ENCODE measurements at regions of chr11 and their contacts with region 1.

Region 1: DNA sequence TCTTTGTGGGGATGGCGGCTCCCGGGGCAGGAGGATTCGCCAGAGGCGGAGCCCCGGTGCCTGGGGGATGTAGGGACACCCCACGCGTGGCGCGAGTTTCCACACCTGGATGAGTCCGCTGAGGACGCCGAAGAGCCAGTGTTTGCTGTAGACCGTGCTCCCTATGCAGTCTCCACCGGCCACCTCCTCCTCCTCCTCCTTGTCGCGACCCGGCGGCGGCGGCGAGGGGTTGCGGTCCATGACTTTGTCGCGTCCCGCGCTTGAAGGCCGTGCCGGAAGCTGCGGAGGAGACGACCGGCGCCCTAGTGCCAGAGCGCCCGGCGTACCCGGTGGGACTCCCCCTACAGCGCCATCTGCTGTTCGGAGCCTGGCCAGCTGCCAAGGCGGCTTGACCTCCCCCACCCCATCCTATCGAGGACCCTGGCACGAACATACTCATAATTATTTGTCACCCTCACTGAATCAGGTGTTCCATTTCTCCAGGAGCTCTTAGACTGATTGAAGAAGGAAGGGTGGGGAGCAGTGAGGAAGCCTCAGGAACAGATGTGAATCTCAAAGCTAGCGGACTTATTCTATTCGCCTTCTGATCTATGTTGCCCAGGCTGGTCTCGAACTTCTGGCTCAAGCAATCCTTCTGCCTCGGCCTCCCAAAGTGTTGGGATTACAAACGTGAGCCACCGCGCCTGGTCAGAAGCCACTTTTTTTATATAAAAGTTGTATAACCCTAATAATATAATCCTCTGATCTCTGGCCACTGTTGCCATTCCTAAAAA is at the start of gene SAAL1:
- DNase-seq: peak; percentile 65 to 95
- H3K4me3 ChIP-seq: peak within 1 kb of the TSS; percentile 93
- CTCF ChIP-seq: no peak
- POLR2A ChIP-seq: no peak
- total RNA-seq, gene SAAL1: 7.2 to 13.7 (median 11.5) TPM

Region 2: DNA sequence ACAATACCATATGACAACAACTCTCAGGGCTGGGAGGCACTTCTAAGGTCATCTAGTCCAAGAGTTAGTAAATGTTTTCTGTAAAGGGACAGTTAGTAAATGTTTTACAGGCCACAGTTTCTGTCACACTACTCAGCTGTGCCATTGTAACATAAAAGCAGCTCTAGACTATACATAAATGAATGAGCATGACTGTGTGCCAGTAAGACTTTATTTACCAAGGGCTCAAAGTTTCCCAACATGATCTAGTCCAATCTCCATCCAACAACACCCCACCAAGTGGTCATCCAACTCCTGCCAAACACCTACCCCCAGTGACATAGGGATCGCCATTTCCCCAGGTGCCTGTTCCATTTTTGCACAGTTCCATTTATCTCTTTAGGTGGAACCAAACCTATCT is 105.2 kb before region 1 on chr11:
- intact Hi-C with region 1: loop called (anchors 10 kb)
- DNase-seq: no peak
- H3K4me3 ChIP-seq: no peak overlapping the region
- CTCF ChIP-seq: no peak
- POLR2A ChIP-seq: no peak

Region 3: DNA sequence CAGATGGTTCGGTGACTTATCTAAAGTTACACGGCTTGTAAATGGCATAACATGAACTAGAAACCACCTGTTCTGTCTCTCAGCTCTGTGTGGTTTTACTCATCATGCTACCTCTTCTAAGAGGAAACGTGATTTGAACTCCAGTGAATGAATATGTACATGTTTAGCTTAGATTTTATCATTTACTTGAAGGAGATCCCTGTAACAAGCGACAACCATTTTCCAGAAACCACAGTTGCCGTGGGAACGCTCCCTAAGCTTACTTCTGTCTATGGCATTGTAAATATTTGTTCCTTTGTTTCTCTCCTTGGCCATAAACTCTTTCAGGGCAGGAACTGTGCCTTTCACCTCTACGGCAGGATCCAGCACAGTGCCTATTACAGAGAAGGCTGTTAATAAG is 42.9 kb before region 1 on chr11:
- intact Hi-C with region 1: no loop called
- DNase-seq: no peak
- H3K4me3 ChIP-seq: no peak overlapping the region
- CTCF ChIP-seq: no peak
- POLR2A ChIP-seq: no peak

Region 4: GRCh38 chr11:18368221-18368620 is 262.2 kb after region 1 on chr11:
- intact Hi-C with region 1: no loop called
- DNase-seq: no peak
- H3K4me3 ChIP-seq: no peak overlapping the region
- CTCF ChIP-seq: no peak
- POLR2A ChIP-seq: no peak

Region 5: DNA sequence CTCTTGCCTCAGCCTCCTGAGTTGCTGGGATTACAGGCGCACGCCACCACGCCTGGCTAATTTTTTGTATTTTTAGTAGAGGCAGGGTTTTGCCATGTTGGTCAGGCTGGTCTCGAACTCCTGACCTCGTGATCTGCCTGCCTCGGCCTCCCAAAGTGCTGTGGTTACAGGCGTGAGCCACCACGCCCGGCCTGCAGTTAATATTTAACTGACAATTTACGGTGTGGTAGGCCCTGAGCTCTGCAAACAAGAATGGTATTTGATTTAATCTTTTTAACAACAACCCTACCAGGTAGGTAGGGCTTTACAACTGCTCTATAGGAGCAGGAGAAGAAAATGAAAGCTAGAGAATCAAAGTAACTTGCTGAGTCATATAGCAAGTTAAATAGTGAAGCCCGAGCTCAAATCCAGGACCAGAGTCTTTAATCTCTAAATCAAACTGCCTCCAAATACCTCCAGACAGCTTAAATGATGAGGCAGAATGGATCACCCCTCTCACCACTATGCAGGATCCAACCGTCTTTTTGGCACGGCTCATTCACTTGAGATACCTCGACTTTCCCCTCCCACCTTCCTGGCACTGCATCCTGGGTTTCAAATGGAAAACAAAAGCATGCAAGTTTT is 473.1 kb after region 1 on chr11:
- intact Hi-C with region 1: no loop called
- DNase-seq: no peak
- H3K4me3 ChIP-seq: no peak overlapping the region
- CTCF ChIP-seq: no peak
- POLR2A ChIP-seq: no peak